ENCODE measurements at regions of chr16 and their contacts with region 1.

Region 1: DNA sequence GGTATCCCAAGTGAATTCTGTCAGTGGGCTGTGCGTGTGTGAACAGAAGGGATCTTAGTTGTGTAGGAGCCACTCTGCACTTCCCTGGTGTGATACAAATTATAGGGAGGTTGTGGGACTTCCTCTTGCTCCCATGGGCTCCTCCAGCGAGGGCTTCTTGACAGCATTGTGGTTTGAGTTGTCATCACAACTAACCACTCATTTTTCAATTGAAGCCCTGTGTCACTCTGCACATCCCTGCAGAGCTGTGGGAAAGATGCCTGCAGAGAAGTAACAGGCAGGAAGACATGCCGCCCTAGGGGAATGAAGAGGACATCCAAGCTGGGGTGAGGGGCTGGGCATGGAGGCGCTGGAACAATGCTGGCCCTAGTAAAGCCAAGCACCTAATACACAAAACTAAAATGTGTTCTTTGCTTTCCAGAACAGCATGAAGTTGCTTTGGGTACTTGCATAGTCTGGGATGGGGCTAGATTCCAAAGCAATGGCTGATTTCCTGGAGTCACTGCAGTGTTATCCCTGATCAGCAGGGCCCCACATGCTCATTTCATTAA is 692.5 kb downstream of the TOX3 start:
- DNase-seq: no peak
- ATAC-seq: no peak
- H3K4me3 ChIP-seq: no peak overlapping the region
- H3K4me3 Mint-ChIP-seq: no peak overlapping the region
- H3K27ac ChIP-seq: no peak overlapping the region
- H3K27ac Mint-ChIP-seq: no peak overlapping the region
- H3K4me1 ChIP-seq: no peaks in the 10 kb centered on the region
- H3K4me1 Mint-ChIP-seq: no peaks in the 10 kb centered on the region
- H3K27me3 ChIP-seq: no peaks in the 10 kb centered on the region
- H3K27me3 Mint-ChIP-seq: no peaks in the 10 kb centered on the region
- CTCF ChIP-seq: no peak

Region 2: DNA sequence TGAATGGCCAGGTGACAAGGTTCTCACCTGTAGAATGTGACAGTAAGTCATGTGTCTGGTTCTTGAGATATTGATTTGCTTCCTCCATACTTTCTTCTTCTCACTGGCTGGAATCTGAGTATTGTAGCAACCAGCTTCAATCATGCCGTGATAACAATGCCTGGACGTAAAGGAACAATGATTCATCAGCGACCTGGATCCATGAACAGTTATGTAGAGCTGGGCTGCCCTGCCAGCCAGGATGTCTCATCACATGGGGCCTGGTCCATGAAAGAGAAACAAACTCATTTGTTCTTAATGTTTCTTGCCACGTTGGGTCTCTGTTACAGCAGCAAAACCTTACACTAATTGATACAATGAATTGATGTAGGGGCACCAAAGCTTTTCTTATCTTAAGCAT is 65.3 kb after region 1 on chr16:
- CTCF ChIA-PET with region 1: no interaction called
- POLR2A ChIA-PET with region 1: no interaction called
- intact Hi-C with region 1: loop called (anchors 10 kb)
- DNase-seq: no peak
- ATAC-seq: no peak
- H3K4me3 ChIP-seq: no peak overlapping the region
- H3K4me3 Mint-ChIP-seq: no peak overlapping the region
- H3K27ac ChIP-seq: no peak overlapping the region
- H3K27ac Mint-ChIP-seq: no peak overlapping the region
- H3K4me1 ChIP-seq: no peaks in the 10 kb centered on the region
- H3K4me1 Mint-ChIP-seq: no peaks in the 10 kb centered on the region
- H3K27me3 ChIP-seq: no peaks in the 10 kb centered on the region
- H3K27me3 Mint-ChIP-seq: no peaks in the 10 kb centered on the region
- CTCF ChIP-seq: no peak